Posterior vena cava (tissue), 2 donors: ENCODE measurements at regions of chr4 and their contacts with region 1.

Region 1: GRCh38 chr4:78864405-78865024 is 74.7 kb downstream of the PAQR3 start:
- DNase-seq: no peak

Region 2: DNA sequence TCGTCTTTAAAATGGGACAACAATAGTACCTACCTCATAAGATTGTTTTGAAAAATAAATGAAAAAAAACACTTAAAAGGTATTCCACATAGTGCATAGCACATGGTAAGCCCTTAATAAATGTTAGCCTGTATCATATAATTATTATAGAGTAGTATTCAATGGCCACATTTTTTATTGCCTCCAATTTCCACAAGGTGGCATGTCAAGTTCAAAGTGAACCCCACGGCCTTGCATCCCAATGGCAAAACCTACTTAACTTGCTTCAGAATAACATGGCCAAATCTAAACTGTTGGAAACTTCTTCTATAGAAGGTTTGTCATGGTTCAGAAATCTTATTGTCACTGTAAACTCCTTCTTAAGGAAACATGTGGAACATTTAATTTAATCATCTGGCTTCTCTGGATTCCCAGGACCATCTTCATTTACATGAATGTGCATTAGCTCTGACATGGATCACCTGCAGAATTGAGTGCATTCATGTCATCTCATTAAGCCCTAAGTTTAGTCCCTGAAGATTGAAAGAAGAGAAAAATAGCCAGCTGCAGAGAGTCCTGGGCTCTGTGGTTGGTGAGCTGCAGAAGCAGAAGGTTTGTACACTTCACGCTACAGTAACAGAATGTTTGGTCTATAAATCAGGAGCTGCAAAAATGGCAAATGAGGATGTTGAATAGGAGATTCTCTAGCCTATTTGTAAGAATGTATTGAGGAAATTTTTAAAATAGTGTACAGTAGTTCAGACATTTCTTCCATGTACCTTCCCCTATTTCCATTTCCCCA is 251.9 kb before region 1 on chr4:
- intact Hi-C with region 1: loop called in 1 of 2 experiments (anchors 10 kb)
- DNase-seq: no peak

Region 3: GRCh38 chr4:78622253-78622979 is 242.1 kb before region 1 on chr4:
- intact Hi-C with region 1: loop called (anchors 10 kb)
- DNase-seq: no peak

Region 4: GRCh38 chr4:78644744-78645330 is 219.7 kb before region 1 on chr4:
- intact Hi-C with region 1: loop called in 1 of 2 experiments (anchors 5 kb)
- DNase-seq: no peak

Region 5: DNA sequence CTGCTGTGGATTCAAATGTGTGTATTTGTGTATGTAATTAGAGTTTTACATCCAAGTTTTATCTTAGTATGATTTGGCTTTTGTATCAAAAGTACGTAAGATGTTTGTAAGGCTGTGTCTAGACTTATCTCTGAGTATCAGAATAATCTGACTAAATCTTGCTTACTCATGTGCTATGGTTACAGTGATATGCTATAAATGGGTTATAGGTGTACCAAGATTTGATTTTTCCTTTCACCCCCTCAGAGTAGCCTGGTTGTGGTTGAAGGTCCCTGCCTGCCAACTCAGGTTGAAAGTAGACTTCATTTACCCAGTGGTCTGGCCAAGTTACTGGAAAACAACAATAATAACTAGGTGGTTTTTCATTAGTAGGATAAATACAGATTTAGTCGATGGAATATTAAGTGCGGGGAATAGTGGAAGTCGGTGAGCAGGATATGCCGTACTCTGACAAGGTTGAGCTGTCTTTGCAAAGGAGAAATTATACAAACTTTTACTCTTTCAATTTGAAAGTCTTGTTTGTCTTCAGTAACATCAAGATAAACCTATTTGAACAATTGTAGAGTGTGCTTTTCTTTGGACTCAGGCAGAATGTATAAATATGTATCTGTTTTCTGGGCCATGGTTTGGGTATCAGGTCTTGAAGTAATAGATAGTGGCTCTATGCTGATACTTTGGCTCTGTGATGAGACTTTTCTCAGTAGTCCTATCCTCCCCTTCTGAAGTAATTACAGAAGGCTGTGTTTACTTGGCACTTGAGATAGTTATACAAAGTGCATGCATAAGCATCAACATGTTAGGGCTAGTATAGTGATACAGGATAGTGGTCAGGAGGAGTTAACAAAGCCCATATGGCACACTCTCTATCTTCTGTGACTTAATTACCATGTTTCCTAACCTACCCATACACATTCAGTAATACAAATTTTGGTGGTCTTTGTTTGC is 64.7 kb before region 1 on chr4:
- intact Hi-C with region 1: no loop called
- DNase-seq: no peak

Region 6: DNA sequence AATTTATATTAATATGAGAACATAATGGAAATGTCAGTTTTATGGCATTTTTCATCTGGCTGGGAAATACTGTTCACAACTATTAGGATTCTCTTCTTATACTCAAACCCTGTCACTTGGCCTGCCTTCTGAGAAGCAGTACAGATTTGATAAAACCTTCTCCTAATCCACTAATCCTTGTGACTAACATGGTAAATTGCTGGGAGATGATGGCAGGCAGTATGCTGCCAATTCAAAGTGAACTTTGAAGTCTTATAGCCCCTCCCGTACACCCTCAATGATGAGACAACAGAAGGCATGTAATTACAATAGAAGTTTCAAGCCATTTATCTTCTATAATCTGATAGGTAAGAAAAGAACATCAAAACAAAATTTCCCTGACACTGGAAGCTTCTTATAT is 37.8 kb after region 1 on chr4:
- intact Hi-C with region 1: no loop called
- DNase-seq: no peak

Region 7: DNA sequence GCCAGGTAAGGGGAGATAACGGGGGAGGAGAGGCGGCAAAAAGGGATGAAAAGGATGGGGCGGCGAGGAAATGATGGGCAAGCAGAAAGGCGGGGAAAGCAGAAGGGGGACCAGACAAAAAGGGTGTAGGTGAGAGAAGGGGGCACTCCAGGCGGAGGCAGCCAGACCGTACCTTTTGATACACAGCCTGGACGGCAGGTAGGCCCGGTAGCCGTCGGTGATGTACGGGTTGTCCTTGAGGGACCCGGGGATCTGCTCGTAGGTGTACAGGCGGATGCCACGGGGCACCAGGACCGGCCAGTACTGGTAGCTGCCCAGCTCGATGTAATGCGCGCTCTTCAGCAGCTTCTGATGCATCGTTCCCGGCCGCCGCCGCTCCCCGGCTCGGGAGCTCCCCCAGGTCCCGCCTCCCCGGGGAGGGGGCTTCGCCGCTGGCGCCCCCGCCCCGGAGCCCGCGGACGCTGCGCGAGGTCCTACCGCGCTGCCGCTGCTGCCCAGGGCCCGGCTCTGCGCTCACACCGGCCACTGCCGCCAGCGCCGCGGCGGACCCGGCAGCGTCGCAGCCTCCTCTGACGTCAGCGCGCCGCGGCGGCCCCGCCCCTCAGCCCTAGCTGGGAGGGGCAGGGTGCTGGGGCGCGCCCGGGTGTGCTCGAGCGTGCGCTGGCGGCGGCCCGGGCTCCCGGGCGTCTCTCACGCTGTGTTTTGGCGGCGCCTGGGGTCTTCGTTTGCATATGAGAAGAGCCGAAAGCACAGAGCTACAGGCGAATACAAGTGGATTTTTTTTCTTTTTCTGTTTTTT is 74.6 kb after region 1 on chr4 and contains the start of gene PAQR3:
- intact Hi-C with region 1: no loop called
- DNase-seq: peak; percentile 95
- total RNA-seq, gene PAQR3: 11.5 to 13.0 TPM

Region 8: GRCh38 chr4:79357365-79357764 is 492.9 kb after region 1 on chr4:
- intact Hi-C with region 1: no loop called
- DNase-seq: no peak